CD8-positive, alpha-beta memory T cell (primary cell): ENCODE measurements at regions of chr14 and their contacts with region 1.

Region 1: GRCh38 chr14:64986578-64987571 is at the start of gene FNTB:
- DNase-seq: peak; percentile 86 to 95 (median 93)
- H3K4me3 ChIP-seq: peak within 1 kb of the TSS; percentile 93
- H3K4me3 Mint-ChIP-seq: peak within 1 kb of the TSS; percentile 92 to 97 (median 96)
- H3K27ac ChIP-seq: peak within 1 kb of the TSS; percentile 69
- H3K27ac Mint-ChIP-seq: peak within 1 kb of the TSS; percentile 87 to 98 (median 96)
- H3K4me1 ChIP-seq: peaks cover 47% of the 10 kb centered on the region
- H3K4me1 Mint-ChIP-seq: peaks cover 50 to 67% (median 57%) of the 10 kb centered on the region in 3 donors
- H3K27me3 ChIP-seq: no peaks in the 10 kb centered on the region
- H3K27me3 Mint-ChIP-seq: peaks cover 4 to 11% of the 10 kb centered on the region in 2 donors
- total RNA-seq, gene FNTB: 14.3 to 14.8 TPM

Region 2: GRCh38 chr14:64736271-64737122 is 250.4 kb before region 1 on chr14:
- CTCF ChIA-PET with region 1: no interaction called
- POLR2A ChIA-PET with region 1: no interaction called
- DNase-seq: peak in 1 of 5 donors; percentile 31
- H3K4me3 ChIP-seq: no peak overlapping the region
- H3K4me3 Mint-ChIP-seq: no peak overlapping the region
- H3K27ac ChIP-seq: no peak overlapping the region
- H3K27ac Mint-ChIP-seq: peak overlapping the region in 4 of 8 donors; percentile 38 to 85 (median 75)
- H3K4me1 ChIP-seq: peaks cover 8% of the 10 kb centered on the region
- H3K4me1 Mint-ChIP-seq: peaks cover 24 to 30% (median 28%) of the 10 kb centered on the region in 3 donors
- H3K27me3 ChIP-seq: no peaks in the 10 kb centered on the region
- H3K27me3 Mint-ChIP-seq: peaks cover 0 to 2% of the 10 kb centered on the region in 2 donors

Region 3: DNA sequence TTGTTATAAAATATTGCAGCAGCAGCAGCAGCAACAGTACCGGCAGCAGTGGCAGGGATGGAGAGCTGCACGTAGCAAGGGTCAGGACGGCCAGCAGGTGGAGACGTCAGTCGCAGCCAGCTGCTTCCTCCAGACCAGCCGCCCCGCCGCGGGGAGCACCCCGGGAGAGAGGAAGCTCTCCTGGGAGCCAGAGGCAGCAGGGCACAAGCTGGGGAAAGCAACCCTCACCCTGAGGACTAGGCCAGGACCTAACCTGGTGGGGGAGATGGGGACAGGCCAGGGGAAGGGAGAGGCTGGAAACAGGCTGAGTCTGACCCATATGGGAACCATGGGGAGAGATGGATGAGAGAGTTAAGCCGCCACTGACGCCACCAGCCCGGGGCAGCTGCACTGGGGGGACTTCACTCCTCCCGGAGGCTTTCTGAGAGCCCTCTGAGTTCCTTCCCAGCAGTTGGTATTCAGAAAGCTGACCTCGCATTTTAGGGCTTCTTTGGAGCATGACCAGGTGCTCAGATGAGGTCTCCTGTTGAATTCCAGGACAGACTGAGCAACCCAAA is 163.5 kb before region 1 on chr14:
- CTCF ChIA-PET with region 1: interaction called, 34 read pairs
- POLR2A ChIA-PET with region 1: interaction called, 7 read pairs
- DNase-seq: peak; percentile 45 to 74 (median 51)
- H3K4me3 ChIP-seq: no peak overlapping the region
- H3K4me3 Mint-ChIP-seq: peak overlapping the region in 2 of 7 donors; percentile 11 to 53
- H3K27ac ChIP-seq: no peak overlapping the region
- H3K27ac Mint-ChIP-seq: peak overlapping the region in 1 of 8 donors; percentile 38
- H3K4me1 ChIP-seq: peaks cover 7% of the 10 kb centered on the region
- H3K4me1 Mint-ChIP-seq: peaks cover 5 to 9% (median 6%) of the 10 kb centered on the region in 3 donors
- H3K27me3 ChIP-seq: peaks cover 4% of the 10 kb centered on the region
- H3K27me3 Mint-ChIP-seq: peaks cover 6 to 59% of the 10 kb centered on the region in 2 donors

Region 4: DNA sequence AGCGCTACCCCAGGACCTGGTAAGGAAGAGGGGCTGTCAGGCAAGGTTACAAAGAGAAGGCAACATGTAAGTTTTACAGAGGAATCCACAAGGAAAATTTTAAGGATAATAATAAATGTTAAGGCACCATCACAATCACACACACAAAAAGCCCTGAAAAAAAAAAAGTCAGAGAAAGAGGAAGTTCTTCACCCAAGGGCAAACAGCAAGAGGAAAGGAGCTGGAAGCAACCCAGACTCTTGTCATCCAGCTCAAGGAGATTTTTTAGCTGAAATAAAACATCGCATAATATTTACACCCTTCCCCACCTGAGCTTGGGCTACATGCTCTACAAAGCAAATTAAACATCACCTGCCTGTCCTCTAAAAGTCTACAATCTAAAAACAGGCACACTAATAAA is 116.7 kb before region 1 on chr14:
- CTCF ChIA-PET with region 1: no interaction called
- POLR2A ChIA-PET with region 1: no interaction called
- DNase-seq: no peak
- H3K4me3 ChIP-seq: no peak overlapping the region
- H3K4me3 Mint-ChIP-seq: no peak overlapping the region
- H3K27ac ChIP-seq: no peak overlapping the region
- H3K27ac Mint-ChIP-seq: peak overlapping the region in 1 of 8 donors; percentile 4
- H3K4me1 ChIP-seq: no peaks in the 10 kb centered on the region
- H3K4me1 Mint-ChIP-seq: no peaks in the 10 kb centered on the region
- H3K27me3 ChIP-seq: no peaks in the 10 kb centered on the region
- H3K27me3 Mint-ChIP-seq: peaks cover 18 to 57% of the 10 kb centered on the region in 2 donors

Region 5: DNA sequence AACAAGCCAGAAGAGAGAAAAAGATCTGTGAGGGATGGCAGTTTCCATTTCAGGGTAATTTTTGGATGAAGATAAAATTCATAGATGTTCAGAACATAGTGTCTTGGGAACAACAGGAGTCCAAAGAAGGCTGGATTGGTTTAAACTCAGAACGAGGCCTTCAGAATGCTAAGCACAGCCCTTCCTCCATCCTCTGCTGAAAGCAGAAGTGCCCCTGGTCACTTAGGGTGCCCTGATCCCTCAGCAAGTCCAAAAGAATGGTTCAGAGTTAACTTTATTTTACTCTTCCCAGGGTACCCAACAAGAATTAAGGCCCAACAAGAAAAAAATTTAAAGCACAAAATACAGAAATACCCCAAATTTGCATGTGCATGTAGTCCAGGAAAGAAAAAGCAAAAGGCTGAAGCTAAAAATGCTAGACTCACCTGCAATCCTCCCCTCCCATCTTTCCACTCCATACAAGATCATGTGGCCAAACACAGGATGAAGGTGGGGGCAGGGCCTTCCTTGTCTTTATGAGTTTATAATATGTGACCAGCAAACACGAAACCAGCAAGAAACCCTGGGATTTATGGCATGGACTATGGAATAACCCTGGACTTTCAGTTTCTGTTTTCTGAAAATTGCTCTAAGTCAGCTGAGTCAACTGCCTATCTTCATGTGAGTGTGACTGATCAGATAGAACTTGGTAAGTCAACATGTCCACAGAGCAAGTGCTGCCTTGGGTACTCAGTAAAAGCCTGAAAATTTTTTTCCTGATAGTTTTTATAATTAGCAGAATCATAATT is 94.3 kb after region 1 on chr14:
- CTCF ChIA-PET with region 1: no interaction called
- POLR2A ChIA-PET with region 1: no interaction called
- DNase-seq: no peak
- H3K4me3 ChIP-seq: no peak overlapping the region
- H3K4me3 Mint-ChIP-seq: peak overlapping the region in 2 of 7 donors; percentile 28 to 30
- H3K27ac ChIP-seq: no peak overlapping the region
- H3K27ac Mint-ChIP-seq: peak overlapping the region in 6 of 8 donors; percentile 3 to 68 (median 34)
- H3K4me1 ChIP-seq: peaks cover 43% of the 10 kb centered on the region
- H3K4me1 Mint-ChIP-seq: peaks cover 68 to 79% (median 77%) of the 10 kb centered on the region in 3 donors
- H3K27me3 ChIP-seq: no peaks in the 10 kb centered on the region
- H3K27me3 Mint-ChIP-seq: no peaks in the 10 kb centered on the region

Region 6: GRCh38 chr14:65102441-65103149 is 115.7 kb after region 1 on chr14 and contains the start of gene MAX:
- CTCF ChIA-PET with region 1: interaction called, 3 read pairs
- POLR2A ChIA-PET with region 1: interaction called, 10 read pairs
- DNase-seq: peak; percentile 96 to 99 (median 99)
- H3K4me3 ChIP-seq: peak within 1 kb of the TSS; percentile 85
- H3K4me3 Mint-ChIP-seq: peak within 1 kb of the TSS; percentile 87 to 96 (median 94)
- H3K27ac ChIP-seq: peak within 1 kb of the TSS; percentile 90
- H3K27ac Mint-ChIP-seq: peak within 1 kb of the TSS; percentile 90 to 99 (median 95)
- H3K4me1 ChIP-seq: peaks cover 38% of the 10 kb centered on the region
- H3K4me1 Mint-ChIP-seq: peaks cover 38 to 47% (median 45%) of the 10 kb centered on the region in 3 donors
- H3K27me3 ChIP-seq: no peaks in the 10 kb centered on the region
- H3K27me3 Mint-ChIP-seq: peaks cover 3 to 4% of the 10 kb centered on the region in 2 donors
- total RNA-seq, gene MAX: 126 to 127 TPM